T-cell (primary cell): ENCODE measurements at regions of chr6 and their contacts with region 1.

Region 1: GRCh38 chr6:129598244-129599187 is 111.5 kb downstream of the ARHGAP18 start:
- DNase-seq: peak in 4 of 35 experiments; percentile 8 to 83 (median 34)
- ATAC-seq: peak; percentile 73 to 80 (median 78)
- H3K4me3 ChIP-seq: no peak overlapping the region
- H3K4me3 Mint-ChIP-seq: no peak overlapping the region
- H3K27ac ChIP-seq: no peak overlapping the region
- H3K27ac Mint-ChIP-seq: no peak overlapping the region
- H3K4me1 ChIP-seq: no peaks in the 10 kb centered on the region
- H3K4me1 Mint-ChIP-seq: peaks cover 0 to 2% (median 0%) of the 10 kb centered on the region in 3 donors
- H3K27me3 ChIP-seq: no peaks in the 10 kb centered on the region
- H3K27me3 Mint-ChIP-seq: no peaks in the 10 kb centered on the region

Region 2: GRCh38 chr6:129621247-129621646 is 22.7 kb after region 1 on chr6:
- CTCF ChIA-PET with region 1: no interaction called
- POLR2A ChIA-PET with region 1: no interaction called
- DNase-seq: peak in 22 of 35 experiments; percentile 0 to 59 (median 15)
- ATAC-seq: peak in 2 of 4 experiments; percentile 48 to 51
- H3K4me3 ChIP-seq: no peak overlapping the region
- H3K4me3 Mint-ChIP-seq: no peak overlapping the region
- H3K27ac ChIP-seq: no peak overlapping the region
- H3K27ac Mint-ChIP-seq: no peak overlapping the region
- H3K4me1 ChIP-seq: no peaks in the 10 kb centered on the region
- H3K4me1 Mint-ChIP-seq: peaks cover 0 to 5% (median 0%) of the 10 kb centered on the region in 3 donors
- H3K27me3 ChIP-seq: no peaks in the 10 kb centered on the region
- H3K27me3 Mint-ChIP-seq: no peaks in the 10 kb centered on the region

Region 3: GRCh38 chr6:129709769-129710449 is 111.4 kb after region 1 on chr6 and contains the start of gene ARHGAP18:
- CTCF ChIA-PET with region 1: interaction called, 3 to 10 read pairs
- POLR2A ChIA-PET with region 1: no interaction called
- DNase-seq: peak; percentile 45 to 78 (median 59)
- ATAC-seq: peak; percentile 88 to 95 (median 94)
- H3K4me3 ChIP-seq: peak within 1 kb of the TSS; percentile 59 to 82
- H3K4me3 Mint-ChIP-seq: peak within 1 kb of the TSS; percentile 82 to 91 (median 87)
- H3K27ac ChIP-seq: peak within 1 kb of the TSS; percentile 35
- H3K27ac Mint-ChIP-seq: peak within 1 kb of the TSS; percentile 86 to 89
- H3K4me1 ChIP-seq: peaks cover 0 to 22% of the 10 kb centered on the region in 2 experiments
- H3K4me1 Mint-ChIP-seq: peaks cover 33 to 38% (median 34%) of the 10 kb centered on the region in 3 donors
- H3K27me3 ChIP-seq: no peaks in the 10 kb centered on the region
- H3K27me3 Mint-ChIP-seq: peaks cover 0 to 3% of the 10 kb centered on the region in 2 donors
- total RNA-seq, gene ARHGAP18: 3.6 to 4.3 (median 4.0) TPM

Region 4: GRCh38 chr6:129730477-129731165 is 132.1 kb after region 1 on chr6:
- CTCF ChIA-PET with region 1: interaction called, 75 to 147 read pairs
- POLR2A ChIA-PET with region 1: interaction called, 3 to 4 read pairs
- DNase-seq: peak in 14 of 35 experiments; percentile 3 to 70 (median 16)
- ATAC-seq: peak in 3 of 4 experiments; percentile 60 to 64 (median 60)
- H3K4me3 ChIP-seq: no peak overlapping the region
- H3K4me3 Mint-ChIP-seq: no peak overlapping the region
- H3K27ac ChIP-seq: no peak overlapping the region
- H3K27ac Mint-ChIP-seq: peak overlapping the region in 1 of 2 donors; percentile 25
- H3K4me1 ChIP-seq: peaks cover 0 to 2% of the 10 kb centered on the region in 2 experiments
- H3K4me1 Mint-ChIP-seq: peaks cover 5 to 16% (median 13%) of the 10 kb centered on the region in 3 donors
- H3K27me3 ChIP-seq: no peaks in the 10 kb centered on the region
- H3K27me3 Mint-ChIP-seq: no peaks in the 10 kb centered on the region

Region 5: DNA sequence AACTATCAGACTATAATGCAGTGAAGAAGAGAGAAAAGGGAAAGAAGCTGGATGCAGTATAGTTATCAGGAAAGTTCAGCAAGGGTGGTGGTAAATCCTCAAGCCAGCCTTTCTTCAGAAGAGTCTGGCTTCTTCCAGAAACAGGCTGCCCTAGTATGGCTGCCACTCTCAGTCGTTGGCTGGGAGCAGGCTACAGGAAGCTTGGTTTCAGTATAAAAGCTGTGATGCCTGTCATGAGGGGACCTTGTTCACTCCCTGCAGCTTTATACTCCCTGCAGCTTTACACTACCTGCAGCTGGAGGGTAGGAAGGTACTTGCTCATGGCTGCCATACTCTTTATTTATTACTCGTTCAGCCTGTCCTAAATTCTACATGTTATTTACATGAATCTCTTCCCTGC is 174.8 kb after region 1 on chr6:
- CTCF ChIA-PET with region 1: interaction called, 9 to 18 read pairs
- POLR2A ChIA-PET with region 1: no interaction called
- DNase-seq: peak in 1 of 35 experiments; percentile 3
- ATAC-seq: peak in 2 of 4 experiments; percentile 27 to 48
- H3K4me3 ChIP-seq: no peak overlapping the region
- H3K4me3 Mint-ChIP-seq: no peak overlapping the region
- H3K27ac ChIP-seq: no peak overlapping the region
- H3K27ac Mint-ChIP-seq: no peak overlapping the region
- H3K4me1 ChIP-seq: peaks cover 0 to 4% of the 10 kb centered on the region in 2 experiments
- H3K4me1 Mint-ChIP-seq: no peaks in the 10 kb centered on the region
- H3K27me3 ChIP-seq: peaks cover 0 to 3% of the 10 kb centered on the region in 2 experiments
- H3K27me3 Mint-ChIP-seq: peaks cover 0 to 3% of the 10 kb centered on the region in 2 donors

Region 6: GRCh38 chr6:130020907-130021629 is 422.6 kb after region 1 on chr6:
- CTCF ChIA-PET with region 1: interaction called, 9 to 37 read pairs
- POLR2A ChIA-PET with region 1: no interaction called
- DNase-seq: peak; percentile 45 to 92 (median 72)
- ATAC-seq: peak; percentile 52 to 60 (median 56)
- H3K4me3 ChIP-seq: peak overlapping the region; percentile 83 to 87
- H3K4me3 Mint-ChIP-seq: peak overlapping the region; percentile 96 to 100 (median 98)
- H3K27ac ChIP-seq: peak overlapping the region; percentile 89
- H3K27ac Mint-ChIP-seq: peak overlapping the region; percentile 97
- H3K4me1 ChIP-seq: peaks cover 6 to 9% of the 10 kb centered on the region in 2 experiments
- H3K4me1 Mint-ChIP-seq: peaks cover 44 to 46% (median 44%) of the 10 kb centered on the region in 3 donors
- H3K27me3 ChIP-seq: no peaks in the 10 kb centered on the region
- H3K27me3 Mint-ChIP-seq: no peaks in the 10 kb centered on the region